ENCODE measurements at regions of chr9 and their contacts with region 1.

Region 1: GRCh38 chr9:36190388-36191287 is at the start of gene CLTA:
- DNase-seq: peak; percentile 96
- ATAC-seq: peak; percentile 99
- H3K4me3 Mint-ChIP-seq: peak within 1 kb of the TSS; percentile 95
- H3K27ac Mint-ChIP-seq: peak within 1 kb of the TSS; percentile 88
- H3K4me1 Mint-ChIP-seq: peaks cover 45% of the 10 kb centered on the region
- H3K27me3 Mint-ChIP-seq: no peaks in the 10 kb centered on the region
- total RNA-seq, gene CLTA: 123 to 133 TPM

Region 2: GRCh38 chr9:36036780-36037548 is 153.7 kb before region 1 on chr9 and contains the start of gene RECK:
- CTCF ChIA-PET with region 1: interaction called, 4 read pairs
- POLR2A ChIA-PET with region 1: no interaction called
- intact Hi-C with region 1: loop called in 1 of 2 experiments (anchors 1 kb)
- DNase-seq: peak; percentile 95
- ATAC-seq: peak; percentile 96
- H3K4me3 Mint-ChIP-seq: peak within 1 kb of the TSS; percentile 83
- H3K27ac Mint-ChIP-seq: peak within 1 kb of the TSS; percentile 85
- H3K4me1 Mint-ChIP-seq: peaks cover 41% of the 10 kb centered on the region
- H3K27me3 Mint-ChIP-seq: no peaks in the 10 kb centered on the region
- total RNA-seq, gene RECK: 5.0 to 5.6 TPM

Region 3: DNA sequence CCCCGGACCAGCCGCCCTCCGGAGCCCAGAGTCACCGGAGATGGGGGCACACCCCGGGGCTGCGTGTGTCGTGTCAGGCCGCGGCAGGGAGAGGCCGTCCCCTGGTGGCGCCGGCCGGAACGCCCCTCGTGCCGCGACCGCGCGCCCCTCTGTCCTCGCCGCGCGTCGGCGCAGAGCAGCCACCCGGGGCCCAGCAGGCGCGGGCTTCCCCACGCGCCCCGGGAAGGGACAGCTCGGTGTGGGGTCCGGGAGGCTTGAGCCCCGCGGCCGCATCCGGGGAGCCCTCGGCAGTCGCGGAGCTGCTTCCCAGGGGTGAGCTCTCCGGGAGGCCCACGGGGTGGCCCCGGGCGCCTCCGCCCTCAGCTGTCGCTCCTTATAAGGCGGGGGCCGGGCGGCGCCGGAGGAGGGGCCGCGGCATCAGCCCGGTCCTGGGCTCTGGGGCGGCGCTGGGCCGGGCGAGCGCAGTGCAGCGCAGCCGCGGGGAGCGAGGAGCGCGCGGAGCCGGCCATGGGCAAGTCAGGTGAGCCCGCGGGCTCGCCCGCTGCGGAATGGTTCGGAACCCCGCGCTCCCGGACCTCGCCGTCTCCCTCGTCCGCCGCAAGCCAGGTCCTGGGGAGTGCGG is 54.3 kb before region 1 on chr9 and contains the start of gene GLIPR2:
- CTCF ChIA-PET with region 1: no interaction called
- POLR2A ChIA-PET with region 1: interaction called, 6 read pairs
- intact Hi-C with region 1: loop called in 1 of 2 experiments (anchors 1 kb)
- DNase-seq: peak; percentile 88
- ATAC-seq: peak; percentile 96
- H3K4me3 Mint-ChIP-seq: peak within 1 kb of the TSS; percentile 81
- H3K27ac Mint-ChIP-seq: peak within 1 kb of the TSS; percentile 48
- H3K4me1 Mint-ChIP-seq: peaks cover 45% of the 10 kb centered on the region
- H3K27me3 Mint-ChIP-seq: no peaks in the 10 kb centered on the region
- total RNA-seq, gene GLIPR2: 13.7 to 18.4 TPM

Region 4: DNA sequence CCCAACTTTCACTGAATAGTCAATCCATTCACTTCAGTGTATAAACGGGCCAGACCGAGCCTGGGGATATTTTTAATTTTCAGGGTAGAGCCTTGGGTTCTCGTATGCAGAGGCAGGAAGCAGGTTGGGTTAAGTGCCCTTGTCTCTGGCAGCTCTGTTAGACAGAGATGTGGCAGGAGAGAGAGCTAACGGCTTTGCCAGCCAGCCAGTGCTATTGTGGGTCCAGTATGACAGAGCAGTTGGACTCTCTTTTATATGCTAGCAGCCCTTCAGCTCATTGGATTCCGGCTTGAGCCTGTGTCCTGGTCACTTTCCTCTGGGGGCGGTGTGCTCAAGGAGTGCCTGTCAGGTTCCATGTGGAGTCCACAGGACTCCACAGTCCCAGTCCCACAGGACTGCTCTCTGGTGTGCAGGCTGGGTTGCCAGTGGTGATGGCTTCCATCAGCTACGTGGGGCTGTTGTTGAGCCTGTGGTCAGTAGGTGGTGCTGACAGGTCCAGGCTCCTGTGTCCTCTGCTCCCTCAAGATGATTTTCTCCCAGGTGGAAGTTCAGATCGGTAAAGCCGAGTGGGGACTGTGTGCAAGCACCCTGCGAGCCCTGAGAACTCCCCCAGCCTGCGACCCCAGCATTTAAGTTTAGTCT is 14.4 kb after region 1 on chr9:
- CTCF ChIA-PET with region 1: interaction called, 28 read pairs
- POLR2A ChIA-PET with region 1: interaction called, 4 read pairs
- intact Hi-C with region 1: loop called in 1 of 2 experiments (anchors 2 kb)
- DNase-seq: no peak
- ATAC-seq: no peak
- H3K4me3 Mint-ChIP-seq: no peak overlapping the region
- H3K27ac Mint-ChIP-seq: no peak overlapping the region
- H3K4me1 Mint-ChIP-seq: peaks cover 44% of the 10 kb centered on the region
- H3K27me3 Mint-ChIP-seq: no peaks in the 10 kb centered on the region

Region 5: GRCh38 chr9:36258208-36258988 is 67.8 kb after region 1 on chr9 and contains the start of gene GNE:
- CTCF ChIA-PET with region 1: interaction called, 4 read pairs
- POLR2A ChIA-PET with region 1: interaction called, 4 read pairs
- intact Hi-C with region 1: loop called (anchors 1 to 2 kb)
- DNase-seq: peak; percentile 99
- ATAC-seq: peak; percentile 85
- H3K4me3 Mint-ChIP-seq: peak within 1 kb of the TSS; percentile 91
- H3K27ac Mint-ChIP-seq: peak within 1 kb of the TSS; percentile 90
- H3K4me1 Mint-ChIP-seq: peaks cover 8% of the 10 kb centered on the region
- H3K27me3 Mint-ChIP-seq: no peaks in the 10 kb centered on the region
- total RNA-seq, gene GNE: 17.0 to 19.0 TPM

Region 6: DNA sequence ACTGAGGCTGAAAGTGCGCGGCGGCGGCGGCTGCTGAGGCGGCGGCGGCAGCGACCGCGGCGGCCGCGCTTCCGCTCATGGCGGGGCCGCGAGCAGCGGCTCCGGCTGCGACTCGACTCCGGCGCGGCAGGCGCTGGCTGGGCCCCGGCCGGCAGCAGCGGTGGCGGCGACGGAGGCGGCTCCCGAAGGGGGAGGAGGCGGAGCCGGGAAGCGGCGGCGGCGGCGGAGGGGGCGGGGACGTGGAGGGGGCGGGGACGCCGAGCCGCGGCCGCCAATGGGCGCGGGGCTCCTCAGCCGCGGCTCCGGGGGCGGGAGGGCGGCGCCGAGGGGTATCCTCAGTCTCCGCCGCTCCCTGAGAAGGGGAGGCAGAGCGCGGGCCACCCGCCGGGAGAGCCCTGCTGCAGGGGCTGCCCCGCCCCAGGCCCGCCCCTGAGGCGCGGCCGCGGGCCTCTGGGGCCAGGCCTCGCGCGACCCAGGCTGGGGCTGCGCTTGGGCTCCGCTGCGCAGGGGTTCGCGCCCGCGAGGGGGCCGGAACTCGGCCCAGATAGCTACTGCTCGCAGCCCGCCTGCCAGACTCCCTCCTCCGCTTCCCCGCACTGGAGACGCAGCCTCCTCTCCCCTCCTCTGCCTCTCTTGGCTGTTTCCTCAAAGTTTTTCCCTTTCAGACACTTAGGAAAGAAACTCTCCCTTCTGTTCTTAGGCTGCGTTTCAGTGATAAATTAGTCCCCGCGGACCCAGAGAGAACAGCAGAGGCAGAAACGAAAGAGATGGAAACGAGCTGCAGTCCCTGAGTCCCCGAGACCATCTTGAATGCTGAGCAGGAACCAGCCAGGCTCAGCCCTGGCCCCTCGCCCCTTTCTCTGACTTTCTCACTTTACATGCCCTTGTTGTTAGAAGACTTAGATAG is 297.1 kb after region 1 on chr9:
- CTCF ChIA-PET with region 1: interaction called, 6 read pairs
- POLR2A ChIA-PET with region 1: no interaction called
- intact Hi-C with region 1: loop called in 1 of 2 experiments (anchors 1 kb)
- DNase-seq: peak; percentile 95
- ATAC-seq: peak; percentile 93
- H3K4me3 Mint-ChIP-seq: peak overlapping the region; percentile 93
- H3K27ac Mint-ChIP-seq: peak overlapping the region; percentile 99
- H3K4me1 Mint-ChIP-seq: peaks cover 63% of the 10 kb centered on the region
- H3K27me3 Mint-ChIP-seq: no peaks in the 10 kb centered on the region